ENCODE measurements at regions of chr10 and their contacts with region 1.

Region 1: DNA sequence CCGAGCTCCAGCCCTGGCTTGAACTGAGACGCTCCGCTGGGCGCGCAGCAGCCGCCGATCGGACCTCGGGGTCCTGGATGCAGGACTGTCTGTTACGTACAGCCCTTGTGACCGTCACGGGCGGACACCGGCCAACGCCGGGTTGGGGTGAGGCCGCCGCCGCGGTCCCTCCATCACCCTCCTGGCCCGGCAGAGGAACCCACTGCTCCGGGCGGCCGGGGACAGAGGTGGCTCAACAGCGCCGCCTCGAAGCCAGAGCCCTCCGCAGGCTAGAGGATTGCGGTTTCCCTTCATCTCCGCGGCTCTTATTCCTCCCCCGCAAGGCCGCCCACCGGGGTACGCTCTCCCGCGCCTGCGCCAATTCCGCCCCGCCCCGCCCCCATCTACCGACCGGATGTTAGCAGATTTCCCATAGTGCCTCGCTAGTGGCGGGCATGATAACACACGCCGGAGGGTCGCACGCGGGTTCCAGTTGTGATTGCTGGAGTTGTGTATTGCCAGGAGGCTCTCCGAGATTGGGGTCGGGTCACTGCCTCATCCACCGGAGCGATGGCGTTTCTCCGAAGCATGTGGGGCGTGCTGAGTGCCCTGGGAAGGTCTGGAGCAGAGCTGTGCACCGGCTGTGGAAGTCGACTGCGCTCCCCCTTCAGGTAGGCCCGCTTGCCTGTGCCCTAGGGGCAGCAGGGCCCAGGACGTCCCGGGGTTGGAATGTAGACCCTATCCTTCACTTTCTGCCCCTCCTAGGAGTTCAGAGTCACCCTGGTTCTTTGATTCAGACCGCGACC is at the start of gene TFAM:
- DNase-seq: peak; percentile 94
- CTCF ChIP-seq: peak; percentile 53

Region 2: GRCh38 chr10:57692255-57692980 is 692.8 kb before region 1 on chr10:
- CTCF ChIA-PET with region 1: no interaction called
- POLR2A ChIA-PET with region 1: no interaction called
- DNase-seq: no peak
- CTCF ChIP-seq: no peak

Region 3: DNA sequence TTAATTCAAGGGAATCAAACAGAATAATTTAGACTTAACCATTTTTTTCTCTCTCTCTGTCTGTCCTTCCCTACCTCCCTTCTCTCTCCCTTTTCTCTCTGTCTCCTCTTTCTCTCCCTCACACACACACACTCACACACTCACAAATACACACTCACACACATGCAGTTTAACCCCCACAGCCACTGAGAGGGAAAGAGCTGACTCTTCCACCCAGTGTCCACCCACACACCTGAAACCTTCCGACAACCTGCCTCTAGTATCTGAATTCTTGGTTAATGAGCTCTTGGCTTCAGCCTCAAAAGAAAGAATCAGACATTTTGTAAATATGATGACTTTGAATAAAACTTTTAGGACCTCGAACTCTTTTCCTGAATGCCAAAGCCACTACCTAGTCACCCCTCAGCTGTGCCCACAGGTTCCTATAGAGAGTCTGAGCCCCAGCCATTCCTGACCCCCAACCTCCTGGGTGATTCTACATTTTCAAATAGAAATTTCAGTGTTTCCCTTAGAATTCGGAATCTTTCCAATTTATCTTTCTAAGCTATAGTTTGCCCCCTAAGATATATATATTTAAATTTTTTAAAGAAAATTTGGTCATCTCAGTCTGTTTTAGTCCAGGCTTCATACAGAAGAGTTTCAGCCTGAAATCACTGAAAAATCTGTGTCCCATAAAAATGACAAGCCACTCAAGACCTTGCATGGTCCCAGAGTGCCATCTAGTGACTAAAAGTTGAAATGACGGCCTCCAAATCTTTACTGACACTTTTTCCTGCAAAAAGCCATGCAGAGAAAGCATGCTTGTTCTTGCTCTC is 320.3 kb before region 1 on chr10:
- CTCF ChIA-PET with region 1: no interaction called
- POLR2A ChIA-PET with region 1: no interaction called
- DNase-seq: peak; percentile 28
- CTCF ChIP-seq: peak; percentile 46

Region 4: DNA sequence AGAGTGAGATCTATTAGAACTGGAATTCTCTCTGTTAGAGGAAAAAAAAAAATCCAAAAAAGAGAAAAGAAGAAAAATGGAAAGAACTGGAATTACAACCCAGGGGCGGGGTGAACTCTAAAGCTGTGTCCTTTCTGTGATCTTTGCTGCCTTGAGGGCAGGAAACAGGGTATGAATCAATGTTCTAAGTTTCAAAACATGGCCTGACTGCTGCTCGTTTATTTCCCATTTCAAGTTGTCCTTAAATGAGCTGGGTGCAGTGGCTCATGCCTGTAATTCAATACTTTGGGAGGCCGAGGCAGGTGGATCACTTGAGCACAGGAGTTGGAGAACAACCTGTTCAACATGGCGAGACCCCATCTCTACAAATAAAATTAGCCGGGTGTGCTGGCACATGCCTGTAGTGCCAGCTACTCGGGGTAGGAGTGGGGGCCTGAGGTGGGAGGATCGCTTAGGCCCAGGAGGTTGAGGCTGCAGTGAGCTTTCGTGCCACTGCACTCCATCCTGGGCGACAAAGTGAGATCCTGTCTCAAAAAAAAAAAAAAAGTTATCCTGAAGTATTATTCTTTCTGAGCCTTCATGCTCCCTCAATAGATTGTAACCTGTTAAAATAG is 24.7 kb before region 1 on chr10:
- CTCF ChIA-PET with region 1: interaction called, 15 read pairs
- POLR2A ChIA-PET with region 1: no interaction called
- DNase-seq: no peak
- CTCF ChIP-seq: no peak

Region 5: DNA sequence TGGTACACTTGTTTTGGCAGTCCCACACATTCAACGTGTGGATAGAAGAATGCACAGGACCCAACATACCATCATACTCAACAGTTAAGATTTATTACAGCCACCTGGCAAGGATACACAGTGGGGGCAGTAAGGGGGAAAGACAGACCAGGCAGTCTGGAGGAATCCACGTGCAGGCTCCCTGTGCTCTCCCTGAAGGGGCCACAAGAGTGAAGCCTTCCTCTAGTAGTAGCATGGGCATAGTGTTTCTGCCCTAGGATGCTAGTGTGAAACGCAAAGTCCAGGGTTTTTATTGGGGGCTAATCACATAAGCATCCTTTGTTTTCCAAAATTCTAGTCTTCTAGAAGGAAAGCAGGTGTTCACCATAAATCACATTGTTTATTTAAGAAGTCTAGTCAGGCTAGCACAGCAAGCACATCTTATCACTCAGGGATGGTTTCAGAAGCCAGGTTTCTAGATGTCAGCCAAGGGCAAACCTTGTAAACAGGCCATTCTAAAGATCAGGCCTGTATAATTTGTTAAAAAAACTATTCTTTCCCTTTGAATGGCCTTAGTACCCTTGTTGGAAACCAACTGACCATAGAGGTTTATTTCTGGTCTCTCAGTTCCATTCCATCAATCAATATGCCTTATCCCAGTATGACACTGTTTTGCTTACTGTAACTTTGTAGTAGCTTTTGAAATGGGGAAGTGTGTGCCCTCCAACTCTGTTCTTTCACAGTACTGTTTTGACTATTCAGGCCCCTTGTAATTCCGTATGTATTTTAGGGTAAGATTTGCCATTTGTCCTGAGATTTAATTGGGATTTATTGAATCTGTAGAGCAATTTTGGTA is 12.4 kb before region 1 on chr10:
- CTCF ChIA-PET with region 1: interaction called, 16 read pairs
- POLR2A ChIA-PET with region 1: no interaction called
- DNase-seq: no peak
- CTCF ChIP-seq: no peak

Measured in GM10248 (cell line).